Activated B cell treated with CpG ODN at 0.5 μM for 24 hours (primary cell): ENCODE measurements at regions of chr18 and their contacts with region 1.

Region 1: DNA sequence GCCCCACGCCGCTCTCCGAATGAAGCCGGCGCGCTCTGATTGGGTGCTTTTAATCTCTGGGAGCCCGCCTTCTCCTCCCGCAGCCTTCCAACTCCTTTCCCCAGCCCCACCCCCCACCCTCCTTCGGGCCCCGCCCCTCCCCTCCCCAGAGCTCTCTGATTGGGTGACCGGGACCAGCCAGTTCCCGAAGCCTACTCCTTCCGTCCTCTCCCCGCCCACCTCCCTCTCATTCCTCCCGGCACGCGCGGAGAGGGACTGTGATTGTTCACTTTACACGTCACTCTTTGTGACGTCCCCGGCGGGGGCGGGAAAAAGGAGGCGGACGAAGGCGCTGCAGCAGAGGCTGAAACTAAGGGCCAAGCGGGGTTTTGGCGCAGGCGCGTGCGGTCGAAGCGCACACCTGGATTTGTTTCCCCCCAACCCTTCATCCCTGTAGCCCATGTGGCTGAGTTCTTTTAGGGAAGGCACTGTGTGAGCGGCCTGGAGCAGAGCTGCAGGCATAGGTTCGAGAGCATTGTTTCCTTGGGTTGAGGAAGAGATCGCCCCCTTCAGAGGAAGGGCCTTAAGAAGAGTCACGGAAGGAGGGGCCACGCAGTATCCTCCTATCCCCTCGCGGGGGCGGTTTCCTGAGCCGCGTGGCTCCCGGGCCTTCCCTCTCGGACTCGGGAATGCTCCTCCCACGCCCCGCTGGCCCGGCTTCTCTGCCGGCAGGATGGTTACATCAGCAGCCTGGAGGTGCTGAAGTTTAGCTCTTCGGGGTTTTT is at the start of gene MEX3C:
- DNase-seq: peak; percentile 98
- ATAC-seq: peak; percentile 82
- H3K4me3 Mint-ChIP-seq: peak within 1 kb of the TSS; percentile 96
- H3K27ac Mint-ChIP-seq: peak within 1 kb of the TSS; percentile 97
- H3K4me1 Mint-ChIP-seq: peaks cover 33% of the 10 kb centered on the region
- H3K27me3 Mint-ChIP-seq: no peaks in the 10 kb centered on the region
- CTCF ChIP-seq: no peak
- total RNA-seq, gene MEX3C: 54.2 and 57.4 TPM in 2 replicates

Region 2: GRCh38 chr18:50281295-50281971 is 916.4 kb before region 1 on chr18 and contains the start of gene MBD1:
- CTCF ChIA-PET with region 1: no interaction called
- POLR2A ChIA-PET with region 1: no interaction called
- intact Hi-C with region 1: loop called (anchors 2 kb)
- DNase-seq: peak; percentile 90
- ATAC-seq: peak; percentile 94
- H3K4me3 Mint-ChIP-seq: peak within 1 kb of the TSS; percentile 97
- H3K27ac Mint-ChIP-seq: peak within 1 kb of the TSS; percentile 93
- H3K4me1 Mint-ChIP-seq: peaks cover 38% of the 10 kb centered on the region
- H3K27me3 Mint-ChIP-seq: no peaks in the 10 kb centered on the region
- CTCF ChIP-seq: no peak
- total RNA-seq, gene MBD1: 101 and 117 TPM in 2 replicates

Region 3: GRCh38 chr18:50878345-50879301 is 319.2 kb before region 1 on chr18 and contains the start of gene ME2:
- CTCF ChIA-PET with region 1: no interaction called
- POLR2A ChIA-PET with region 1: interaction called, 20 read pairs
- intact Hi-C with region 1: loop called (anchors 1 kb)
- DNase-seq: peak; percentile 98
- ATAC-seq: peak; percentile 94
- H3K4me3 Mint-ChIP-seq: peak within 1 kb of the TSS; percentile 98
- H3K27ac Mint-ChIP-seq: peak within 1 kb of the TSS; percentile 97
- H3K4me1 Mint-ChIP-seq: peaks cover 31% of the 10 kb centered on the region
- H3K27me3 Mint-ChIP-seq: no peaks in the 10 kb centered on the region
- CTCF ChIP-seq: no peak
- total RNA-seq, gene ME2: 58.2 and 63.5 TPM in 2 replicates

Region 4: DNA sequence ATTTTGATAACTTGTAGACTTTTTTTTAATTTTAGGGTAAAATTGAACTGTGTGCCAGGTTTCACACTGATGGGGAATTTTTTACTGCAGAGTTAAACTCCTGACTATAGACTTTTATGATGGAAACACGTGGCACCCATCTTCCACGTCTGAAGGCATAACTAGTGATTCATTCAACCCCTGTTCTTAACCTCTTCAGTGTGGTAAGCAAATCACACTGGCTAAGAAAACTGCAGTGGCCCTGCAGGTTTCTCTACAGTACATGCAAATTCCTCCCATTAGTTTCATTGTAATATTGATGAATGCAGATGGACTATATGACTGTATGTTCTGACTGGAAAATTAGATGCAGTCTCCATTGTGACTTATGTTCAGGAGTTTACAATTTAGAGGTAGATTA is 120.6 kb before region 1 on chr18:
- CTCF ChIA-PET with region 1: no interaction called
- POLR2A ChIA-PET with region 1: interaction called, 3 read pairs
- intact Hi-C with region 1: loop called (anchors 5 kb)
- DNase-seq: no peak
- ATAC-seq: peak; percentile 33
- H3K4me3 Mint-ChIP-seq: no peak overlapping the region
- H3K27ac Mint-ChIP-seq: no peak overlapping the region
- H3K4me1 Mint-ChIP-seq: peaks cover 34% of the 10 kb centered on the region
- H3K27me3 Mint-ChIP-seq: no peaks in the 10 kb centered on the region
- CTCF ChIP-seq: no peak

Region 5: GRCh38 chr18:51171223-51171622 is 26.6 kb before region 1 on chr18:
- CTCF ChIA-PET with region 1: no interaction called
- POLR2A ChIA-PET with region 1: interaction called, 15 read pairs
- intact Hi-C with region 1: loop called (anchors 2 kb)
- DNase-seq: no peak
- ATAC-seq: peak; percentile 28
- H3K4me3 Mint-ChIP-seq: no peak overlapping the region
- H3K27ac Mint-ChIP-seq: peak overlapping the region; percentile 68
- H3K4me1 Mint-ChIP-seq: peaks cover 43% of the 10 kb centered on the region
- H3K27me3 Mint-ChIP-seq: no peaks in the 10 kb centered on the region
- CTCF ChIP-seq: no peak